Activated B cell treated with CpG ODN at 0.5 μM for 24 hours (primary cell): ENCODE measurements at regions of chr1 and their contacts with region 1.

Region 1: GRCh38 chr1:41151846-41152245 is 90.3 kb downstream of the SCMH1 start:
- DNase-seq: no peak
- ATAC-seq: no peak
- H3K4me3 Mint-ChIP-seq: no peak overlapping the region
- H3K27ac Mint-ChIP-seq: no peak overlapping the region
- H3K4me1 Mint-ChIP-seq: no peaks in the 10 kb centered on the region
- H3K27me3 Mint-ChIP-seq: no peaks in the 10 kb centered on the region
- CTCF ChIP-seq: no peak

Region 2: DNA sequence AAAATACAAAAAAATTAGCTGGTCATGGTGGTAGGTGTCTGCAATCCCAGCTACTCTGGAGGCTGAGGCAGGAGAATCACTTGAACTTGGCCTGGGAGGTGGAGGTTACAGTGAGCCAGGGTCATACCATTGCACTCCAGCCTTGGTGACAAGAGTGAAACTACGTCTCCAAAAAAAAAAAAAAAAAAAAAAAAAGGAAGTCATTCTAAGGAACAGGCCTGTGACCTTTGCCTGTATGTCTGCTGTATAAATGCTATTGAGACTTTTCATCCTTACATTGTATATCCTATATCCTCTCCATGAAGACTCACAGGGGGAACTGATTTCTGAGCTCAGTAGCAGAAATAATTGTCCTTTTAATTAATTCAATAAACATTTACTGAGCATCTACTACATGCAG is 179.9 kb before region 1 on chr1:
- CTCF ChIA-PET with region 1: no interaction called
- POLR2A ChIA-PET with region 1: interaction called, 10 read pairs
- intact Hi-C with region 1: no loop called
- DNase-seq: no peak
- ATAC-seq: no peak
- H3K4me3 Mint-ChIP-seq: no peak overlapping the region
- H3K27ac Mint-ChIP-seq: no peak overlapping the region
- H3K4me1 Mint-ChIP-seq: peaks cover 4% of the 10 kb centered on the region
- H3K27me3 Mint-ChIP-seq: no peaks in the 10 kb centered on the region
- CTCF ChIP-seq: no peak